ENCODE measurements at regions of chr19 and their contacts with region 1.

Region 1: DNA sequence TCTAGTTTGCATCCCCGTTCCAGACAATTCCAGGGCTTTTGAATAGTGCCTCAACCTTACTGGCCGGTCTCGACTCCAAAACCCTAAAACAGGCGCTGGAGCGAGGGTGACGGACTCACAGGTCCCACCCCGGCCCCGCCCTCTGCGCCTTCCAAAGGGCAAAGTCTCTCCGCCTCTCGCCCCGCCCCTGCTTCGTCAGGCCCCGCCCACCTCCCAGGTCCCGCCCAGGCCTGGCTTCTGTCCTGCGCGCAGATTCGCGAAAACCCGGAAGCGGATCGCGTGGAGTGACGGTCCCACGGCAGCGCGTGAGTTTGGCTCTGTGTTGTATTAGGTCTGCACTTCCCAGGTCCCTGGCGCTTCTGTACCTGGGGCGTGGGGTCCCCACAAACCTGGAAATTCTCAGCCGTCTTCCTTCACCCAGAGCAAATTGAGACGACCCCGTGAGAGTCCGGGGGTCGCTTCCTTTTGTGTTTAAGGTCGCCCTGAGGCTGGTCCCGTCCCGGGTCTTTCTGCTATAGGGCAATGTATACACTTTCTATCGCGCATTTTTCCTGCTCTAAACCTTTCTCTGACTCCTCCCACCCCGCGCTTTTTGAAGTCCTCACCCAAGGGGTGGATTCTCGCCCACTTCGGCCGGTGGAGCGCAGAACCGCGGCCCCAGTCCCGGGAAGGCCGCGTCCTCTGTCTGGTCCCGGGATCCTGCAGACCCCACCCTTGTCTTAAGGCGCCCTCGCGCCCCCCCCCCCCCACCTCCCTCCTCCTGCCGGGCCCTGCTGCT is at the start of gene ZNF813:
- DNase-seq: peak; percentile 93 to 99 (median 96)
- ATAC-seq: peak; percentile 97
- H3K4me3 ChIP-seq: peak within 1 kb of the TSS; percentile 74
- H3K4me3 Mint-ChIP-seq: peak within 1 kb of the TSS; percentile 96
- H3K27ac ChIP-seq: peak within 1 kb of the TSS; percentile 21 to 60
- H3K27ac Mint-ChIP-seq: peak within 1 kb of the TSS; percentile 89
- H3K4me1 ChIP-seq: peaks cover 15% of the 10 kb centered on the region
- H3K4me1 Mint-ChIP-seq: peaks cover 35% of the 10 kb centered on the region
- H3K27me3 ChIP-seq: peaks cover 0 to 5% of the 10 kb centered on the region in 2 experiments
- H3K27me3 Mint-ChIP-seq: peaks cover 12% of the 10 kb centered on the region
- CTCF ChIP-seq: no peak
- total RNA-seq, gene ZNF813: 2.0 to 2.7 TPM

Region 2: GRCh38 chr19:53333463-53334449 is 133.9 kb before region 1 on chr19 and contains the start of gene ZNF845:
- CTCF ChIA-PET with region 1: no interaction called
- POLR2A ChIA-PET with region 1: no interaction called
- intact Hi-C with region 1: loop called in 1 of 2 experiments (anchors 5 kb)
- DNase-seq: peak; percentile 91 to 99 (median 95)
- ATAC-seq: peak; percentile 97
- H3K4me3 ChIP-seq: peak within 1 kb of the TSS; percentile 82
- H3K4me3 Mint-ChIP-seq: peak within 1 kb of the TSS; percentile 95
- H3K27ac ChIP-seq: peak within 1 kb of the TSS in 1 of 2 donors; percentile 72
- H3K27ac Mint-ChIP-seq: peak within 1 kb of the TSS; percentile 84
- H3K4me1 ChIP-seq: peaks cover 17% of the 10 kb centered on the region
- H3K4me1 Mint-ChIP-seq: peaks cover 22% of the 10 kb centered on the region
- H3K27me3 ChIP-seq: peaks cover 0 to 4% of the 10 kb centered on the region in 2 experiments
- H3K27me3 Mint-ChIP-seq: peaks cover 8% of the 10 kb centered on the region
- CTCF ChIP-seq: no peak
- total RNA-seq, gene ZNF845: 7.5 to 8.0 TPM

Region 3: DNA sequence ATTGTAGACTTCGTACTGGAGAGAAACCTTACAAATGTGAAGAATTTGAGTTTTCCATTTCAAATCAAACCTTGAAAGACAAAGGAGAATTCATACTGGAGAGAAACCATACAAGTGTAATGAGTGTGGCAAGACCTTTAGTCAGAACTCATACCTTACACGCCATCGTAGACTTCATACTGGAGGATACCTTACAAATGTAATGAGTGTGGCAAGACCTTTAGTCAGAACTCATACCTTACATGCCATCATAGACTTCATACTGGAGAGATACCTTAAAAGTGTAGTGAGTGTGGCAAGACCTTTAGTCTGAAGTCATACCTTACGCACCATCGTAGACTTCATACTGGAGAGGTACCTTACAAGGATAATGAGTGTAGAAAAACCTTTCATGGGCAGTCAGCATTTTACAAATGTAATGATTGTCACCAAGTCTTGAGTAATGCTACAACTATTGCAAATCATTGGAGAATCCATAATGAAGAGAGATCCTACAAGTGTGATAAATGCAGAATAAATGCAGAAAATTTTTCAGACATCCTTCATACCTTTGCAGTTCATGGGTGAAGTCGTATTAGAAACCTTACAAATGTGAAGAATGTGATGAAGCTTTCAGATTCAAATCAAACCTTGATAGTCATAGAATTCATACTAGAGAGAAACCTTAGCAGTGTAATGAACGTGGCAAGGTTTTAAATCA is 58.0 kb before region 1 on chr19:
- CTCF ChIA-PET with region 1: no interaction called
- POLR2A ChIA-PET with region 1: no interaction called
- intact Hi-C with region 1: no loop called
- DNase-seq: no peak
- ATAC-seq: no peak
- H3K4me3 ChIP-seq: no peak overlapping the region
- H3K4me3 Mint-ChIP-seq: no peak overlapping the region
- H3K27ac ChIP-seq: no peak overlapping the region
- H3K27ac Mint-ChIP-seq: no peak overlapping the region
- H3K4me1 ChIP-seq: no peaks in the 10 kb centered on the region
- H3K4me1 Mint-ChIP-seq: no peaks in the 10 kb centered on the region
- H3K27me3 ChIP-seq: no peaks in the 10 kb centered on the region
- H3K27me3 Mint-ChIP-seq: no peaks in the 10 kb centered on the region
- CTCF ChIP-seq: no peak

Region 4: DNA sequence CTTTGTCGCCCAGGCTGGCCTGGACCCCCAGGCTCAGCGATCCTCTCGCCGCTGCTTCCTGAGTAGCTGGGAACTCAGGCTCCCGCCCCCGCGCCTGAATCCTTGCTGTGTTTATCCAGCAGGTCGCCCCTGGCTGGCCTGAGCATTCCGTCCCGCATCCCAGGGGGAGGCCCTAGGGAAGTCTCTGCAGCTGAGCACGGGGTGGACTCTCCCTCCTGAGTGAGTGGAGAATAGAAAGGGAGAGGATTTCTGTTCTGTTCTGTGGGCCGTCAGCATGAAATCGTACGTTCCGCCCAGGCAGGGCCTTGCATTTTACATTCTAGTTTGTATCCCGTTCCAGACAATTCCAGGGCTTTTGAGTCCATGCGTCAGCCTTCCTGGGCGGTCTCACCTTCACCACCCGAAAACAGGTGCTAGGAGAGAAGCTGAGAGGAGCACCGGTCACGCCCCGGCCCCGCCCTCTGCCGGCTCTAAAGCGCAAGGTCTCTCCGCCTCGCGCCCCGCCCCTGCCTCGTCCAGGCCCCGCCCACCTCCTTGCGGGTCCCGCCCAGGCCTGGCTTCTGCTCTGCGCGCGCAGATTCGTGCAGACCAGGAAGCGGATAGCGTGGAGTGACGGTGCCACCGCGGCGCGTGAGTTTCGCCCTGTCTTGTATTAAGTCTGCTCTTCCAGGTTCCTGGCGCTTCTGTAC is 36.1 kb before region 1 on chr19 and contains the start of gene ZNF761:
- CTCF ChIA-PET with region 1: no interaction called
- POLR2A ChIA-PET with region 1: interaction called, 5 read pairs
- intact Hi-C with region 1: loop called (anchors 1 kb)
- DNase-seq: peak; percentile 94 to 99 (median 98)
- ATAC-seq: peak; percentile 96
- H3K4me3 ChIP-seq: peak within 1 kb of the TSS; percentile 88
- H3K4me3 Mint-ChIP-seq: peak within 1 kb of the TSS; percentile 98
- H3K27ac ChIP-seq: peak within 1 kb of the TSS; percentile 51 to 80
- H3K27ac Mint-ChIP-seq: peak within 1 kb of the TSS; percentile 96
- H3K4me1 ChIP-seq: peaks cover 15% of the 10 kb centered on the region
- H3K4me1 Mint-ChIP-seq: peaks cover 41% of the 10 kb centered on the region
- H3K27me3 ChIP-seq: no peaks in the 10 kb centered on the region
- H3K27me3 Mint-ChIP-seq: no peaks in the 10 kb centered on the region
- CTCF ChIP-seq: no peak
- total RNA-seq, gene ZNF761: 4.5 to 5.6 TPM